Naive thymus-derived CD8-positive, alpha-beta T cell (primary cell): ENCODE measurements at regions of chr1 and their contacts with region 1.

Region 1: GRCh38 chr1:25874934-25875855 is at the start of gene PAQR7:
- DNase-seq: peak; percentile 32 to 82 (median 60)
- ATAC-seq: peak; percentile 84 to 91
- H3K4me3 Mint-ChIP-seq: peak within 1 kb of the TSS; percentile 81 to 89 (median 85)
- H3K27ac Mint-ChIP-seq: peak within 1 kb of the TSS; percentile 31 to 92 (median 86)
- H3K4me1 Mint-ChIP-seq: peaks cover 5 to 31% (median 17%) of the 10 kb centered on the region in 4 donors
- H3K27me3 Mint-ChIP-seq: no peaks in the 10 kb centered on the region
- polyA plus RNA-seq, gene PAQR7: 0.08 to 0.32 (median 0.30) TPM

Region 2: GRCh38 chr1:25858906-25859789 is 16.0 kb before region 1 on chr1 and contains the start of gene AUNIP:
- POLR2A ChIA-PET with region 1: interaction called, 11 read pairs
- DNase-seq: peak; percentile 80 to 93 (median 88)
- ATAC-seq: peak; percentile 98 to 99
- H3K4me3 Mint-ChIP-seq: peak within 1 kb of the TSS; percentile 87 to 96 (median 92)
- H3K27ac Mint-ChIP-seq: peak within 1 kb of the TSS; percentile 84 to 96 (median 95)
- H3K4me1 Mint-ChIP-seq: peaks cover 11 to 28% (median 20%) of the 10 kb centered on the region in 4 donors
- H3K27me3 Mint-ChIP-seq: peaks cover 0 to 2% (median 0%) of the 10 kb centered on the region in 5 donors
- polyA plus RNA-seq, gene AUNIP: not detected

Region 3: GRCh38 chr1:25922056-25922969 is 47.1 kb after region 1 on chr1:
- POLR2A ChIA-PET with region 1: no interaction called
- DNase-seq: peak; percentile 26 to 79 (median 55)
- ATAC-seq: peak; percentile 84 to 88
- H3K4me3 Mint-ChIP-seq: peak overlapping the region; percentile 80 to 92 (median 90)
- H3K27ac Mint-ChIP-seq: peak overlapping the region; percentile 60 to 91 (median 85)
- H3K4me1 Mint-ChIP-seq: peaks cover 12 to 40% (median 32%) of the 10 kb centered on the region in 4 donors
- H3K27me3 Mint-ChIP-seq: peaks cover 0 to 2% (median 0%) of the 10 kb centered on the region in 5 donors